GM12878 (cell line): ENCODE measurements at regions of chr5 and their contacts with region 1.

Region 1: DNA sequence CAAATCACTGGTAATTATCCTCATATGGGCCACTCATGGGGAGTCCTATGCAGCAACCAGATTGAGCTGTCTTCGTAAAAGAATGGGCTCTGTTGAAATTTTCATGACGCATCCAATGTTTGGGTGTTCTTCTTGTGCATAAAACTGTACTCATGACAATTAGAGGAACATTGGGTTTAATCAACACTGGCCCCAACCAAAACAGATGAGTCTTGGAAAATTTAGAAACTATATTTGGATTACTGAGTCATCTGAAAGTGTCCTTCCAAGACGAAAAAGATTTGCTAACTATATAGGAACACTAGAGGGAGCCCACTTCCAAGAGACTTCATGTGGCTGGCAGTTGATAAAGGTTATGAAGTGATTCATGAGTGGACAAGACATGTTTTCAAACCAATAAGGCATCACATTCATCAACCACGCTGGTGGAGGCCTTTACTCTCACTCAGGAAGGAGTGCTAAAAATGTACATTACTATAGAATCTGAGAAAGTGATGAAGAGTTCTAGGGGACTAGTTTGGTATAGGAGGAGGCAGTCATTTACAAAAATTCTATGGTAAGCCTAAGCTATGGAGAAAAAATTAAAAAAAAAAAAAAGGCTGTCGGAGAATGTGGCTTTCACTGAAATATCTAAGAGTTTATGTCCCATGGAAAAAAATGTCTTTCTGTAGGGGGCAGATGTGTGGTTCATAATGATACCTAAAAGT is 313.5 kb downstream of the PRDM9 start:
- DNase-seq: no peak
- ATAC-seq: peak; percentile 80
- H3K4me3 ChIP-seq: no peak overlapping the region
- H3K27ac ChIP-seq: no peak overlapping the region
- H3K4me1 ChIP-seq: no peaks in the 10 kb centered on the region
- H3K27me3 ChIP-seq: no peaks in the 10 kb centered on the region
- CTCF ChIP-seq: peak; percentile 24 to 56 (median 41); a peak in 3 of 6 replicates
- EP300 ChIP-seq: no peak
- POLR2A ChIP-seq: no peak
- RAD21 ChIP-seq: 0 out of 2 replicates have a peak, but pooled peaks have one; percentile 29

Region 2: DNA sequence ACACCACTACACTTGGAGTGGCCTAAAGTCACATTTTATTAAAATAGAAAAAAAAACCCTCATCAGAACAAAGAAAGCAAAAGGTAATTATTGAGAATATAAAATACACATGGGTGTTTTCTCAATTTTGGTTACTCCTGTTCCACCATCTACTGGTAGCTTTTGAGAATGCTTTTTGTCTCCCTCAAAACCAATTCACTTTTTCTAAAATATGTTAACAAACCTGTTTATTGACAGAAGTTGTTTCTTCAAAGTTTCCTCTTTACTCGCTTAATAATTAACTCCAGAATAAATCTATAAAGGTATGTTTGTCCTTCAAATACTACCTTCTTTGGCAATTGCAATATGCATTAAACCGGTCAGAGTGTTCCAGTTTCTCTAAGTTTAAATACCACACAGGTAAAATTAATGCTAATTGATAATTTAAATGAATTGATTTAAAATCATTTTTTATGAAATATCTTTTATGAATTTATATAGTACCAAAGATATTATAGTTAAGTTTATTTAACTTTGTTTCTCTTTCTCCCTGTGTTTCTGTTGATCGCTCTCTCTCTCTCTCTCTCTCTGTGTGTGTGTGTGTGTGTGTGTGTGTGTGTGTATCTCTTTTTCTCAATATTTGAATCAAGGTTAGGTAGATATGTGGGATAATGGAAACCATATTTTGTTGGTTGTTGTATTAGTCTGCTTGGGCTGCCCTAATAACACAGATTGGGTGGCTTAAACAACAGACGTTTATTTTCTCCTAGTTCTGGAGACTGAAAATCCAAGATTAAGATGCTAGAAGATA is 173.9 kb after region 1 on chr5:
- CTCF ChIA-PET with region 1: interaction called, 3 read pairs
- POLR2A ChIA-PET with region 1: no interaction called
- RAD21 ChIA-PET with region 1: no interaction called
- SMC1A ChIA-PET with region 1: interaction called, 3 read pairs
- in situ Hi-C with region 1: no loop called
- intact Hi-C with region 1: loop called (anchors 2 kb)
- DNase-seq: no peak
- ATAC-seq: no peak
- H3K4me3 ChIP-seq: no peak overlapping the region
- H3K27ac ChIP-seq: no peak overlapping the region
- H3K4me1 ChIP-seq: no peaks in the 10 kb centered on the region
- H3K27me3 ChIP-seq: no peaks in the 10 kb centered on the region
- CTCF ChIP-seq: no peak; a peak in 1 of 6 replicates
- EP300 ChIP-seq: no peak
- POLR2A ChIP-seq: no peak
- RAD21 ChIP-seq: no peak

Region 3: GRCh38 chr5:24110004-24110615 is 289.2 kb after region 1 on chr5:
- CTCF ChIA-PET with region 1: interaction called, 7 read pairs
- POLR2A ChIA-PET with region 1: no interaction called
- RAD21 ChIA-PET with region 1: no interaction called
- SMC1A ChIA-PET with region 1: interaction called, 3 read pairs
- in situ Hi-C with region 1: no loop called
- intact Hi-C with region 1: loop called (anchors 2 kb)
- DNase-seq: no peak
- ATAC-seq: peak; percentile 38; the same call in 2 of the 3 replicates
- H3K4me3 ChIP-seq: no peak overlapping the region
- H3K27ac ChIP-seq: no peak overlapping the region
- H3K4me1 ChIP-seq: no peaks in the 10 kb centered on the region
- H3K27me3 ChIP-seq: no peaks in the 10 kb centered on the region
- CTCF ChIP-seq: peak in 2 of 3 experiments; percentile 37 to 38; a peak in 3 of 6 replicates
- EP300 ChIP-seq: no peak
- POLR2A ChIP-seq: no peak
- RAD21 ChIP-seq: peak; percentile 37